Activated naive CD4-positive, alpha-beta T cell treated with anti-CD3 and anti-CD28 coated beads for 36 hours (primary cell): ENCODE measurements at regions of chr12 and their contacts with region 1.

Region 1: GRCh38 chr12:53675651-53676453 is at the start of gene ATP5MC2:
- DNase-seq: peak; percentile 98
- H3K4me3 Mint-ChIP-seq: peak within 1 kb of the TSS; percentile 95
- H3K27ac Mint-ChIP-seq: peak within 1 kb of the TSS; percentile 91
- H3K4me1 Mint-ChIP-seq: peaks cover 32% of the 10 kb centered on the region
- H3K27me3 Mint-ChIP-seq: peaks cover 13% of the 10 kb centered on the region
- total RNA-seq, gene ATP5MC2: 443 to 466 TPM

Region 2: DNA sequence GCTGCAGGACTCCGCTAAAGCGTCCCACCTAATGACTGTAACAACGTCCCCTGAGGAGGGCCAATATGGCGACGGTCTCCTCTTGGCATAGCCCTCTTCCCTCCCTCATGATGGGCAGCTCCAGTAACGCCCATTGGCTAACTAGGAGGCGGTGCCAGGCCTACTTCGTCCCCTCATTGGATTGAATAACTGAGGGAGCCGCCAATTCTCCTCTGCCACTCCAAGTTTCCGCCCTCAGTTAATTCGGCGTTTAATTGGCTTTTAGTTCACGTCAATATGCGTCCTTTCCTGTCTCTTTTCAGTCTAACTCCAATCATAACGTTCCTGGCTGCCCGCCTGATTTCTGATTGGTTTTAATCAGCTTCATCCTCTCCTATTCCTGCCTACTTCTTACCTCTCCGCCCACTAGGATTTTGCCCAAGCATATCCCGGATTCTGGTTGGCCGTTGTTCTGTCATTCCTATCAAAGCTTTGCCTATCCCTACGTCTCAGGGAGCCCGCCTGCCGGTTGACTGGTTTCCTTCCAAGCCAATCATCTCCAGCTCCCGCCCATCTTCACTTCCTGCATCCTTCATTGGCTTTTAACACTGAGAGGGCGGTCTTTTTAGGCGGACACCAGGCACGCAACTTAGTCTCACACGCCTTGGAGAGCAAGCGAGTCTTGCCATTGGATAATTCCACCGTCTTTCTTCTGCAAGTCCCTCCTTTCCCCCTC is 296.3 kb before region 1 on chr12:
- CTCF ChIA-PET with region 1: no interaction called
- intact Hi-C with region 1: no loop called
- DNase-seq: peak; percentile 99
- H3K4me3 Mint-ChIP-seq: no peak overlapping the region
- H3K27ac Mint-ChIP-seq: no peak overlapping the region
- H3K4me1 Mint-ChIP-seq: peaks cover 48% of the 10 kb centered on the region
- H3K27me3 Mint-ChIP-seq: no peaks in the 10 kb centered on the region

Region 3: GRCh38 chr12:53451661-53452158 is 224.1 kb before region 1 on chr12 and contains the start of gene PCBP2:
- CTCF ChIA-PET with region 1: no interaction called
- intact Hi-C with region 1: loop called (anchors 1 kb)
- DNase-seq: peak; percentile 99
- H3K4me3 Mint-ChIP-seq: peak within 1 kb of the TSS; percentile 99
- H3K27ac Mint-ChIP-seq: peak within 1 kb of the TSS; percentile 99
- H3K4me1 Mint-ChIP-seq: peaks cover 36% of the 10 kb centered on the region
- H3K27me3 Mint-ChIP-seq: no peaks in the 10 kb centered on the region
- total RNA-seq, gene PCBP2: 1,085 to 1,132 TPM

Region 4: GRCh38 chr12:53543539-53543938 is 132.3 kb before region 1 on chr12:
- CTCF ChIA-PET with region 1: interaction called, 92 read pairs
- intact Hi-C with region 1: loop called (anchors 1 kb)
- DNase-seq: peak; percentile 77
- H3K4me3 Mint-ChIP-seq: no peak overlapping the region
- H3K27ac Mint-ChIP-seq: peak overlapping the region; percentile 26
- H3K4me1 Mint-ChIP-seq: peaks cover 13% of the 10 kb centered on the region
- H3K27me3 Mint-ChIP-seq: no peaks in the 10 kb centered on the region

Region 5: GRCh38 chr12:53599579-53599978 is 76.3 kb before region 1 on chr12:
- CTCF ChIA-PET with region 1: no interaction called
- intact Hi-C with region 1: loop called (anchors 2 kb)
- DNase-seq: no peak
- H3K4me3 Mint-ChIP-seq: no peak overlapping the region
- H3K27ac Mint-ChIP-seq: no peak overlapping the region
- H3K4me1 Mint-ChIP-seq: peaks cover 20% of the 10 kb centered on the region
- H3K27me3 Mint-ChIP-seq: no peaks in the 10 kb centered on the region

Region 6: DNA sequence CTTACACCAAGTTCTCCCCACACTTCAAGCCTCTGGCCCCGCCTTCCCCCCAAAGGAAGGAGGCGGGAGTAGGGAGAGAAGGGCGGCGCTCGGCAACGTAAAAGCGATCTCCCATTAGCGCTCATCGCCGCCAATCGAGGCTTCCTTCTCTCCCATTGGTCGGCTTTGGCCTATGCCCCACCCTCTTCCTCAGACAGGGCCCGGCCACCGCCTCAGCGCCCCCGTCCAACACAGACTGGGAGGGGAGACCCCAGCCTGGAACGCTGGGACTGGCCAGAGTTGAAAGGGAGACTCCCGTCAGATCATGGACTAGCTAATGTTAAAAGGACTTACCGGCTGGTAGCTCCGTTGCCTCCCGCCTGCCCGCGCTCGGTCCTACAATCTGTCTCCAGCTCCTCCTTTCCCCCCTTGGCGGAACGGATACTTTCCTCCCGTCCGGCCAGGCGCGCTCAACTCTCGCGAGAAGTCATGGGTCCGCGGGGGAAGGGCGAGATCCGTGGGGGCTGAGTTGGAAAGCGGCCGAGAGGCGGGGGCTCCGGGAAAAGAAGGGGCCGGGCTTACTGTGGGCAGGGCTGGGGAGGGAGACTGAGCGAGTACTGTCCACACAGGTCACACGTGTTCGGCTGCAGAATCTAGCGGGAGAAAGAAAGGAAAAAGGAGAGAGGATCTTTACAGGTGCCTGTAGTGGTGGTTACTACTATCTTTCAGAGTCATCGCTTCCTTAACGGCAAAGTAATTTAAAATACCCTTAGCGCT is 49.7 kb before region 1 on chr12 and contains the start of gene ATF7:
- CTCF ChIA-PET with region 1: interaction called, 5 read pairs
- intact Hi-C with region 1: loop called (anchors 1 kb)
- DNase-seq: peak; percentile 99
- H3K4me3 Mint-ChIP-seq: peak within 1 kb of the TSS; percentile 97
- H3K27ac Mint-ChIP-seq: peak within 1 kb of the TSS; percentile 96
- H3K4me1 Mint-ChIP-seq: peaks cover 44% of the 10 kb centered on the region
- H3K27me3 Mint-ChIP-seq: no peaks in the 10 kb centered on the region
- total RNA-seq, gene ATF7: 19.7 to 19.8 TPM

Region 7: DNA sequence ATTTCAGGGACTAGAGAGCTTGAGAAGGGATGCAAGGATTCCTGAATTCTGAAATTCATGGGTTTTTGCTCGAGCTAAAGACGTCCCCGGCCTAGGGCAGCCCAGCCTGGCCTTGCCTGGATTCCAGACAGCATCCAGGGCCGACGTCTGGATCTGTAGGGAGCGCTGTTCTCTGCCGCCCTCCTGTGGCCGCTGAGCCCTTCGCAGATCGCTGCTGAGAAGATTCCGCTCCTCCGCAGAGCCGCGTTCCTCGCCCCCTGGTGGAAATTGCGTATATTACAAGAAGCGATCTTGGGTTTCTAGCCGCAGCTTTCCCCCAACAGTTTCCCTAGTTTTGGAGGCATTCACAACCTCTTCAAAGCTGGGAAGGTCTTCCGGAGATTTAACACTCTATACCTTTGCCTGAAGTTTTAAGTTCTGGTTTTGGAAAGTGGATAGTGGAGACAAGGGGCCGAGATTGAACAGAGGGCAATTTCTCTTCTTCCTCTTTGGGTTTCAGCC is 70.8 kb after region 1 on chr12:
- CTCF ChIA-PET with region 1: interaction called, 43 read pairs
- intact Hi-C with region 1: loop called (anchors 1 kb)
- DNase-seq: peak; percentile 94
- H3K4me3 Mint-ChIP-seq: no peak overlapping the region
- H3K27ac Mint-ChIP-seq: no peak overlapping the region
- H3K4me1 Mint-ChIP-seq: peaks cover 5% of the 10 kb centered on the region
- H3K27me3 Mint-ChIP-seq: peaks cover 20% of the 10 kb centered on the region

Region 8: GRCh38 chr12:53917126-53917653 is 241.3 kb after region 1 on chr12:
- CTCF ChIA-PET with region 1: no interaction called
- intact Hi-C with region 1: no loop called
- DNase-seq: no peak
- H3K4me3 Mint-ChIP-seq: no peak overlapping the region
- H3K27ac Mint-ChIP-seq: no peak overlapping the region
- H3K4me1 Mint-ChIP-seq: no peaks in the 10 kb centered on the region
- H3K27me3 Mint-ChIP-seq: peaks cover 49% of the 10 kb centered on the region